ENCODE measurements at regions of chr12 and their contacts with region 1.

Region 1: DNA sequence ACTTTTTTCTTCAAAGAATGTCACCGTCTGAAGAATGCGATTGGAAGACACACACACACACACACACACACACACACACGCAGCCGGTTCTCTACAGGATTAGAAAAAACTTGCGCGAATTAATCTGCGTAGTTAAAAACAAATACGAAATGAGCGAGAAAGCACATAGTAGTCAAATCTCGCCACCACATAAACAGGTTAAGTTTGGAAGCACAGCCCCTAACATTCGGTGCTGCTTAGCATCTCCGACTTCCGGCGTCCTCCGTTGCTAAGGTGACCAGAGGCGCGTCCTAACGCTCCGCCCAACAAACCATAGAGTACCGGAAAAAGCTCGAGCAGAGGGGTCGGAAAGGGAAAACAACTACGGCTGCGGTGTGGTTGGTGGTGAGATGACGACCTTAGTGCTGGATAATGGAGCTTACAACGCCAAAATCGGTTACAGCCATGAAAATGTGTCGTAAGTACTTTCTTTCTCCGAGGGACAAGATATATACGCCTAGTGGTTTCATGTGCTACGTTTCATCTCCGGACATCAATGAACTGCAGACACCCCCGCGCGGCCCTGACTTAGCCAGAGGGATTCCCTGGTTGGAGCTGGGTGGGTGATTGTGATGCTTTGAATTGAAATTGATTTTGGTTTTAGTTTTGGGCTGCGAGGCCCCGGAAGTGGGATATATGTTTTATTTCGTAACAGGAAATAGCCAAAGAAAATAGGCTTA is at the start of gene ACTR6:
- DNase-seq: peak; percentile 95
- H3K4me3 Mint-ChIP-seq: peak within 1 kb of the TSS; percentile 98
- H3K27ac Mint-ChIP-seq: peak within 1 kb of the TSS; percentile 100
- H3K4me1 Mint-ChIP-seq: peaks cover 20% of the 10 kb centered on the region
- H3K27me3 Mint-ChIP-seq: no peaks in the 10 kb centered on the region
- total RNA-seq, gene ACTR6: 40.4 and 42.1 TPM in 2 replicates

Region 2: GRCh38 chr12:98593351-98594049 is 1607.1 kb before region 1 on chr12 and contains the start of gene SLC25A3:
- intact Hi-C with region 1: loop called (anchors 5 kb)
- DNase-seq: peak; percentile 92
- H3K4me3 Mint-ChIP-seq: peak within 1 kb of the TSS; percentile 91
- H3K27ac Mint-ChIP-seq: peak within 1 kb of the TSS; percentile 93
- H3K4me1 Mint-ChIP-seq: peaks cover 23% of the 10 kb centered on the region
- H3K27me3 Mint-ChIP-seq: no peaks in the 10 kb centered on the region
- total RNA-seq, gene SLC25A3: 619 and 622 TPM in 2 replicates

Region 3: GRCh38 chr12:100058482-100059029 is 142.1 kb before region 1 on chr12:
- intact Hi-C with region 1: loop called (anchors 5 kb)
- DNase-seq: no peak
- H3K4me3 Mint-ChIP-seq: peak overlapping the region; percentile 34
- H3K27ac Mint-ChIP-seq: peak overlapping the region; percentile 83
- H3K4me1 Mint-ChIP-seq: peaks cover 18% of the 10 kb centered on the region
- H3K27me3 Mint-ChIP-seq: no peaks in the 10 kb centered on the region

Region 4: DNA sequence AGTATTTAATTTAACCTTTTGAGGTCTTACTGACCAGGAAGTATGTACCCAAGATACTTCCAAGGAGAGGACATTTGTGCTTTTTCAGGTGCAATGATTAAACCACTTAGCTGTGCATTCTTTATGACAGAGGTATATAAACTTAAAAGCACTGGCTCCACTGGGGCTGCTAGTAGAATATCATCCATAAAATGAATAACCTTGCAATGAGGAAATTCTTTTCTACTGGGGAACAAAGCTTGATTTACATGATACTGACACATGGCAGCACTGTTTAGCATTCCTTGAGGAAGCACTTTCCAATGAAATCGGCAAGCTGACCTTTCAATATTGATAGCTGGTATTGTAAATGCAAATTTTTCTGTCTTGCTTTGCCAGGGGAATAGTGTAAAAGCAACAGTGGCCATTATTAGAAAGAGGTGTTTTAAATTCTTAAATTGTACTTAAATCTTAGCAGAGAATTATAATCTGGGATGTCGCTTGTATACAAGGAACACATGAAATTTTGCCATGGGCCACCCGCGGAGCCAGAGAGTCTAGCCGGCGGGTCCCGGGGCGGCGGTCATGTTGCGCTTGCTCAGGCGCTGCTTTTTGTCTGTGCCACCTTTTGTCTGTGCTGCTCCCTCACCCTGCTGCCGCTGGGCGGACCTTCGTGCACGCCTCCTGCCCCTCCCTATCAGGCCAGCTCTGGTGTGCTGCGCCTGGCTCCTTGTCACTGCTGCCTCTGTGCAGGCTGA is 37.0 kb before region 1 on chr12:
- intact Hi-C with region 1: loop called (anchors 5 kb)
- DNase-seq: peak; percentile 66
- H3K4me3 Mint-ChIP-seq: peak overlapping the region; percentile 71
- H3K27ac Mint-ChIP-seq: peak overlapping the region; percentile 34
- H3K4me1 Mint-ChIP-seq: peaks cover 11% of the 10 kb centered on the region
- H3K27me3 Mint-ChIP-seq: no peaks in the 10 kb centered on the region

Region 5: GRCh38 chr12:100266835-100267618 is 66.4 kb after region 1 on chr12 and contains the starts of genes DEPDC4 and SCYL2:
- intact Hi-C with region 1: loop called (anchors 1 kb)
- DNase-seq: peak; percentile 89
- H3K4me3 Mint-ChIP-seq: peak within 1 kb of the TSS; percentile 95
- H3K27ac Mint-ChIP-seq: peak within 1 kb of the TSS; percentile 98
- H3K4me1 Mint-ChIP-seq: peaks cover 27% of the 10 kb centered on the region
- H3K27me3 Mint-ChIP-seq: no peaks in the 10 kb centered on the region
- total RNA-seq, gene DEPDC4: 1.7 and 1.8 TPM in 2 replicates
- total RNA-seq, gene SCYL2: 31.8 and 34.5 TPM in 2 replicates

Measured in activated T-helper 2 cell treated with anti-CD3 and anti-CD28 coated beads, Interferon-gamma antibody, Interleukin-2, Interleukin-4, amounts not matched to agents 10 μg/mL and 5 μg/mL and 100 μg/mL, durations not matched to agents 14 hours and 24 hours and 36 hours (primary cell).